ENCODE measurements at regions of chr3 and their contacts with region 1.

Region 1: GRCh38 chr3:120081719-120082118 is 12.5 kb downstream of the GSK3B start:
- DNase-seq: no peak
- H3K4me3 ChIP-seq: no peak overlapping the region
- H3K27ac ChIP-seq: no peak overlapping the region
- H3K4me1 ChIP-seq: no peaks in the 10 kb centered on the region
- H3K27me3 ChIP-seq: no peaks in the 10 kb centered on the region
- CTCF ChIP-seq: no peak

Region 2: DNA sequence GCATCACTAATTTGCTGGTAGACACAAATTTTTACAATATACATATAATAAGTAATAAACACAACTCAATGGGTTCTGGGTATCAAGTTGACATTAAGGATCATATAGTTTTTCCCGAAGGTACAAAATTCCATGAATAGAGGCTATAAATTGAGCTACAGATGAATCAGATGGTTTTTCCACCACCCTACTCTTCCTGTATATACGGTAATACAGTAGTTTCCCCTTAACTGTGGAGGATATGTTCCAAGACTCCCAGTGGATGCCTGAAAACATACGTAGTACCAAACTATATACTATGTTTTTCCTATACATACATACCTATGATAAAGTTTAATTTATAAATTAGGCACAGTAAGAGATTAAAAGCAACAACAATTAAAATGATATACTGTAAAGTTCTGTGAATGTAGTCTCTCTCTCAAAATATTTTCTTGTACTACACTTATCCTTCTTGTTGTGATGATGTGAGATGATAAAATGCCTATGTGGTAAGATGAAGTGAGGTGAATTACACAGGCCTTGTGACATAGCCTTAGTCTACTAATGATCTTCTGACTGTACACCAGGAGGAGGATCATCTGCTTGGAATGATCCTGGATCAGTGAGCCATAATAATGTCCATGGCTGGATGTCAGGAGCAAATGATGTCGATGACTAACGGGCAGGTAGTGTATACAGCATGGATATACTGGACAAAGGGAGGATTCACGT is 183.1 kb before region 1 on chr3:
- CTCF ChIA-PET with region 1: no interaction called
- POLR2A ChIA-PET with region 1: no interaction called
- intact Hi-C with region 1: no loop called
- DNase-seq: no peak
- H3K4me3 ChIP-seq: no peak overlapping the region
- H3K27ac ChIP-seq: no peak overlapping the region
- H3K4me1 ChIP-seq: no peaks in the 10 kb centered on the region
- H3K27me3 ChIP-seq: no peaks in the 10 kb centered on the region
- CTCF ChIP-seq: no peak

Region 3: DNA sequence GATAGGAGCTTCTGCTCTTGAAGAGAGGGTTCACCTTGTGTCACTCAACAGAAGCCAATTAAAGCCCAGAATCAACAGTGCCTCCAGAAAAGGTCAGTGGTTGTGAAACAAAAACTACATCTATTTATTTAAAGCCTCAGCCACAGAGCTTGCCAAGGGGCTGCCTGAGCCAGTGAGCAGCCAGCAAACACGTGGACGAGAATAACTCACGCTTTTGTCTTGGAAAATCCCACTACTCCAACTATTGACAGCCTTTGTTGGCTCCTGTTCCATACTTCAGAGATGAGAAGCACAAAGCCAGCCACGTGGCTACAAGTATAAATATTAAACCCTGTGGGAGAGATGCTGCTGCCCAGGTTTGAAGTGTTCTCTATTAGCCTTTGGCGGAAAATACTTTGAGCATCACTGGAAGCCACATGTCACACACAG is 193.0 kb after region 1 on chr3:
- CTCF ChIA-PET with region 1: no interaction called
- POLR2A ChIA-PET with region 1: interaction called, 16 read pairs
- intact Hi-C with region 1: no loop called
- DNase-seq: no peak
- H3K4me3 ChIP-seq: no peak overlapping the region
- H3K27ac ChIP-seq: no peak overlapping the region
- H3K4me1 ChIP-seq: no peaks in the 10 kb centered on the region
- H3K27me3 ChIP-seq: no peaks in the 10 kb centered on the region
- CTCF ChIP-seq: no peak

Measured in PC-9 (cell line).